Panc1 (cell line): ENCODE measurements at regions of chr2 and their contacts with region 1.

Region 1: DNA sequence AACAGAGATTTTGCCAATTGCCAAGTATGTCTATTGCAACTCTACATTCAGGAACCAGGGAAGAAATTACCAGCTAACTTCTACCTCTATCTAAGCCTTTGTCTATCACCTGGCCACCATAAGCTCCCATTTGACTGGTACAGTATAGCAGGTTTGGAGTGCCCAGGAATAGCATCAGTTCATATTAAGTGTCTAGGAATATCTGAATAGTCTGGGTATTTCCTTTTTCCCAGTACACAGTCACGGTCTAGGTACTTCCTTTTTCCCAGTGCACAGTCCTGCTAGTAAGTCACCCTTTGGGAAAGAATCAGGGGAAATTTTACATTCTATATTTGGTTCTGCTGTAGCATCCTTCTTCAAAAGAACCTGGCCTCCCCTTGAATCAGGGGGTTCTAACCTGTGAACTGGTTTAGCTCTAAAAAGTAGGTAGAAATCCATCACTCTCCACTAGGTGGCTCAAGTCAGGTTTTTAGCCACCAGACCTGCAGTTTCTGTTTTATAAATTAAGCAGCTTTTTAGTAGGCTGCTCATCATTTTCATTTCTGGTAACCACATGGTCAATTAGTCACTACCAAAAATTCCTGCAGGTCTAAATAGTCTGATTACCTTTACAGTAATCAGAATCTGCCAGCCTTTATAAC is 49.3 kb upstream of the DNAJC10 start:
- DNase-seq: no peak
- ATAC-seq: peak; percentile 56; the same call in 1 of the 2 replicates
- H3K4me3 ChIP-seq: no peak overlapping the region
- H3K27ac ChIP-seq: no peak overlapping the region
- H3K4me1 ChIP-seq: no peaks in the 10 kb centered on the region
- H3K27me3 ChIP-seq: peaks cover 3% of the 10 kb centered on the region; the same call in 1 of the 2 replicates
- CTCF ChIP-seq: peak; percentile 65

Region 2: DNA sequence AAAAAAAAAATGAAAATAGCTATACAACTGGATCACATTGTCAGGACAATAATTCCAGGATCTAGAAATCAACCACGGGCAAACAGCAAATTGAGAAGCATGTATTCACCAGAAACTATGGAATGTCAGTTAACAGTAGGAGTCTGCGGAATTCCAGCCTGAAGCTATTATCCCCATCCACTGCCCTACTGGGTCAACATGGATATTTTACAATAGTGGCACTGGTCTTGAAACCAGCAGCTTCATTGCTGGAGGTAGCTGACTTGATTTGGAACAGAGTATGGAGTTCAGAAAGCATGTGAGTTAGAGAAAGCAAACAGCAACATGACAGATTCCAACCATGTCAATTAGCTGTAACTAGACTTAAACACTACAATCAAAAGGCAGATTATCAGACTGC is 184.3 kb before region 1 on chr2:
- CTCF ChIA-PET with region 1: no interaction called
- POLR2A ChIA-PET with region 1: interaction called, 14 read pairs
- in situ Hi-C with region 1: no loop called
- intact Hi-C with region 1: no loop called
- DNase-seq: no peak
- ATAC-seq: no peak
- H3K4me3 ChIP-seq: no peak overlapping the region
- H3K27ac ChIP-seq: no peak overlapping the region
- H3K4me1 ChIP-seq: no peaks in the 10 kb centered on the region
- H3K27me3 ChIP-seq: no peaks in the 10 kb centered on the region
- CTCF ChIP-seq: no peak